Mucosa of descending colon (tissue), 3 donors: ENCODE measurements at regions of chr7 and their contacts with region 1.

Region 1: DNA sequence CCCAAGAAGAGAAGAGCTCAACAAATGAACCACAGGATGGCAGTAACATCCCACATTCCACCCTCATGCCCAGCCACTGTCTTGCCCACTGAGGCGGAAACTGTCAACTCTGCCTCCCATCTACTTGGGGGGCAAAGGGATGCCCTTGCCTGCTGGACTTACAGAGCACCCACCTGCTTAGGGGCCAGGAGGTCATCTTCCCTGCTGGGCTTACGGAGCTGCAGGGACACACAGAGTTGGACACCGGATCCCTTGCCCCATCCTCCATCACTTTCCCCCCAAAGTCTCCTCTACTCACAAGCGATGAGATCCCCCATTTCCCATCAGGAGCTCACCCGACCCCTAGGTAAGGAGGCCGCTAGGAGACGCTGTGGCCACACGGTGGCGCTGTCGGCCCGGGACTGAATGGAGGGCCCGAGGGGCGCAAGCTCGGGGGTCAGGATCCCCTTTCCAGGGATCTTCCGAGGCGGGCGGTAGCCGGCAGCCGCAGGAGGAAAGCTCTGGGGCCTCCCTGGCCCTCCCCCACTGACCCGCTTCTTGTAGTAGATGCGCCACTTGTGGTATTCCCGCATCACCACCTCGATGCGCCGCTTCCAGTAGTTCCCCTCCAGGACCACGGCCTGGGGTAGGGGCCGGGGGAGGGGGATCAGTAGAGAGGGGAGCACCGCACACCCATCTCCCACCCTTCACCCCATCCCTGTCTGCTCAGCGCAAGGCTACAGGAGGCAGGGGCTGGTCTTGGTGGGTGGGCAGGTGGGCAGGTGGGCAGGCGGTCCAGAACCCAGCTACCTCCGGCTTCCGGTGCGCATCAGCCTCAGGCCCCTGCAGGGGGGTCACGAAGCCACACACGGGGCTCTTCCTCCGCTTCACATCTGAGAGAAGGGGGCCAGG is 17.3 kb downstream of the MLXIPL start:
- DNase-seq: peak in 2 of 3 donors; percentile 59 to 69
- ATAC-seq: peak; percentile 70
- H3K4me3 ChIP-seq: no peak overlapping the region
- H3K4me1 ChIP-seq: no peaks in the 10 kb centered on the region
- CTCF ChIP-seq: peak; percentile 76

Region 2: GRCh38 chr7:73678862-73679261 is 71.8 kb after region 1 on chr7:
- intact Hi-C with region 1: loop called in 1 of 2 experiments (anchors 10 kb)
- DNase-seq: no peak
- ATAC-seq: no peak
- H3K4me3 ChIP-seq: no peak overlapping the region
- H3K4me1 ChIP-seq: peaks cover 18% of the 10 kb centered on the region
- CTCF ChIP-seq: no peak

Region 3: GRCh38 chr7:73721377-73721817 is 114.4 kb after region 1 on chr7:
- intact Hi-C with region 1: loop called (anchors 5 kb)
- DNase-seq: peak in 1 of 3 donors; percentile 50
- ATAC-seq: peak; percentile 10
- H3K4me3 ChIP-seq: no peak overlapping the region
- H3K4me1 ChIP-seq: peaks cover 12% of the 10 kb centered on the region
- CTCF ChIP-seq: no peak

Region 4: DNA sequence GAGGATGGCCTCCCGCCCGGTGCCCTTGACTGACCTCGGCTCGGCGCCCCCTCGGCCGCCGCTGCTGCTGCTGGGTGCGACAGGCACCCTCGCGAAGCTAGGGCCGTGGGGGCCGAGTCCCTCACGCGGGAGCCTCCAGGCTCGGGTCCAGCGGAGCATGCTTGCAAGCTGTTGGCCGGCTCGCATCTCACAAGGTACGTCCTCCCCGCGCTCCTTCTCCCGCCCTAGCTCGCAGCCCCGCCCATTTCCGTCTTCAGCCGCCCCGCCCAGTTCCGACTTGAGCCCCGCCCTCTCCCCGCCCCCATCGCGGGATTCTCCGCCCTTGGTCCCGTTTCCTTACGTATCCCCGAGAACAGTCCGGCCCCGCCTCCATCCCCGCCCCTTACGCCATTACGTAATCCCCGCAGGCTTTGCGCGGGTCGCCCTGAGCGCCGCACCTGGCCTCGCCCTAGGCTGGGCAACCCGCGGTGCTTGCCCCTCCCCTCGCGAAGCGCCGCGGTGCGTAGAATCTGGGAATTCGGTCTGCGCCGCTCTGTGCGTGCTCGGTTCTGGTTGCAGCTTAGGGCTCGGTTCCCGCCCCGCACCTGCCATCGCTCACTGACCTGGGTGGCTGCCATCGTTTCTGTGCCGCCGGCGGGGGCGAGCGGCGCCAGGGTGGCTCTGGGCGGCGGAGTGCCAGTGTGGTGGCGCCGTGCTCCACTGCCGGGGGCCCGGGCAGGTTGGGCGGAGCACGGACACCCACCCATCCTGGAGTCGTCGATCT is 131.7 kb after region 1 on chr7 and contains the start of gene ABHD11:
- intact Hi-C with region 1: loop called in 1 of 2 experiments (anchors 5 kb)
- DNase-seq: peak; percentile 99
- ATAC-seq: peak; percentile 70
- H3K4me3 ChIP-seq: peak within 1 kb of the TSS; percentile 86
- H3K4me1 ChIP-seq: peaks cover 56% of the 10 kb centered on the region
- CTCF ChIP-seq: no peak
- total RNA-seq, gene ABHD11: 55.3 to 115 (median 97.3) TPM